ENCODE measurements at regions of chr3 and their contacts with region 1.

Region 1: DNA sequence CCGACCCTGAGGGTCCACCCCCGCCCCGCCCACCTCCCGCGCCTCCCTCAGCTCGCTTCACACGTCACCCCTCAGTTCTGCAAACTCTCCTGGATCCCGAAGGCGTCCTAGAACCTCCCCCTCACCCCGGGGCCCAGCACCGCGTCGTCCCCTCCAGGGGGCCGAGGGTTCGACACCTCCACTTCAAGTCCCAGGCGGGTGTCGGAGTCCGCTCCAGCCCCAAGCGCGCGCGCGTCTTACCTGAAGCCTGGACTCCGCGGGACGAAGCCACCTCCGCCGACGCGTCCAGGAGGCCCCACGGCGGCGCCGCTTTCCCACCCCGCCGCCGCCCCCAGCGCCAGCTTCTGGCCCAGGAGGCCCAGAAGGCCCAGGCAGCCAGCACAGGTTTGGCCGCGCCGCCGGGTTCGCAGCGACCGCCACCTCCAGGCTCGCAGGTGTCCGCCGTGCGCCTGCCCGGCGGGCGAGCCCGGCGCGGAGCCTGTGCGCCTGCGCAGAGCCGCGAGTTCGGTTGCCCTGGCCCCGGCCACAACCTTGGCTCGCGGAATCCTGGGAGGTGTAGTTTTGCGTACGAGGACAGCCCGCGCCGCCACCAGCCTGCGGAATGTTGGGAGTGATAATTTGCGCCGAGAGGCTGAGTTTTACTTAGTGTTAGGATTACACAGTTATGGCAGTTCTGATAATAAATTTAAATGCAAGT is at the start of gene POMGNT2:
- DNase-seq: peak; percentile 93
- H3K4me3 ChIP-seq: peak within 1 kb of the TSS; percentile 72 to 91 (median 82)
- H3K27ac ChIP-seq: peak within 1 kb of the TSS; percentile 66 to 83 (median 72)
- H3K4me1 ChIP-seq: peaks cover 0 to 30% (median 23%) of the 10 kb centered on the region in 4 donors
- H3K27me3 ChIP-seq: no peaks in the 10 kb centered on the region
- CTCF ChIP-seq: no peak
- EP300 ChIP-seq: no peak
- POLR2A ChIP-seq: no peak
- total RNA-seq, gene POMGNT2: 15.5 to 20.2 (median 17.2) TPM

Region 2: GRCh38 chr3:42979044-42979972 is 126.4 kb before region 1 on chr3 and contains the start of gene GASK1A:
- intact Hi-C with region 1: loop called (anchors 5 kb)
- DNase-seq: peak; percentile 85
- H3K4me3 ChIP-seq: peak within 1 kb of the TSS; percentile 45 to 89 (median 64)
- H3K27ac ChIP-seq: peak within 1 kb of the TSS; percentile 64 to 79 (median 75)
- H3K4me1 ChIP-seq: peaks cover 0 to 26% (median 19%) of the 10 kb centered on the region in 4 donors
- H3K27me3 ChIP-seq: no peaks in the 10 kb centered on the region
- CTCF ChIP-seq: no peak
- EP300 ChIP-seq: no peak
- POLR2A ChIP-seq: no peak
- total RNA-seq, gene GASK1A: 8.1 to 32.7 (median 18.1) TPM

Region 3: GRCh38 chr3:43001094-43001553 is 104.6 kb before region 1 on chr3:
- intact Hi-C with region 1: loop called (anchors 2 kb)
- DNase-seq: peak; percentile 97
- H3K4me3 ChIP-seq: peak overlapping the region in 2 of 4 donors; percentile 16 to 23
- H3K27ac ChIP-seq: peak overlapping the region; percentile 63 to 90 (median 88)
- H3K4me1 ChIP-seq: peaks cover 0 to 78% (median 56%) of the 10 kb centered on the region in 4 donors
- H3K27me3 ChIP-seq: no peaks in the 10 kb centered on the region
- CTCF ChIP-seq: no peak
- EP300 ChIP-seq: peak; percentile 55 to 95 (median 90)
- POLR2A ChIP-seq: no peak

Region 4: DNA sequence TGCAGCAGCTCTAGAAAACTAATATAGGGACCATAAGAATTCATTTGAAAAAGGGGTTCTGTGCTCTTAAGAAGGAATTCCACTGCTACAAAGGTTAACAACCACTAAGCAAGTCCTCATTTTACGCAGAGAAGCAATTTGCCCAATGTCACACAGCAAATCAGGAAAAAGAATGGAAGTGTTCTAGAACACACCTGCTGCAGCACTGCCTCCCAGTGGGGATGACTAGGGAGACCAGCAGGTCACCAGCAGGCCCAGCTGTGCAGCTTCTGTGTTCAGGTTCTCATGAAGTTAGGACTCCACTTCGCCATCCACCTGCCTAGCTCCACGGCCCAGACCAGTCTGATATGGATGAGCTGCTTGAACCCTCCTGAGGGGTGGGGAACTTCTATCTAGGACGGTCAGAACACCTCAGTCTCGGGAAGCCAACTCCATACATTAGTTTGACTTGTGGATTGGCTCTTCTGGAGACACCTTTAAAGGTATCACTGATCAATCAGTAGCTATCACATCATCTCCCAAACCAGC is 18.4 kb before region 1 on chr3:
- intact Hi-C with region 1: no loop called
- DNase-seq: no peak
- H3K4me3 ChIP-seq: no peak overlapping the region
- H3K27ac ChIP-seq: no peak overlapping the region
- H3K4me1 ChIP-seq: peaks cover 0 to 22% (median 16%) of the 10 kb centered on the region in 4 donors
- H3K27me3 ChIP-seq: no peaks in the 10 kb centered on the region
- CTCF ChIP-seq: no peak
- EP300 ChIP-seq: no peak
- POLR2A ChIP-seq: no peak

Region 5: DNA sequence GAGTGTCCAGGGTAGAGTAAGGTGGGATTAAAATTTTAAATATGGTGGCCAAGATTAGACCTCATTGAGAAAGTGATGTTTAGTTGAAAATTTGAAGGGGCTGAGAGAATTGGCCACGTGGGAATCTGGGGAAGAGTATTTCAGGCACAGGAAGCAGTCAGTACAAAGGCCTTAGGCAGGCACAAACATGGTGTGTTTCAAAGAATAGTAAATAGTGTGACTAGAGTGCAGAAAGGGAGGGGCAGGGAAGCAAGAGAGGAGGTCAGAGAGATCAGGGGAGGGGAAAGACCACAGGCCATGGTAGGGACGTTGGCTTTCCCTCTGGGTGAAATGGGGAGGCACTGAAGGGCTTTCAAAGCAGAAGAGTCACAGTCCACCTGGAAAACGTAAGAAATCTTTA is 36.7 kb after region 1 on chr3:
- intact Hi-C with region 1: no loop called
- DNase-seq: no peak
- H3K4me3 ChIP-seq: no peak overlapping the region
- H3K27ac ChIP-seq: no peak overlapping the region
- H3K4me1 ChIP-seq: no peaks in the 10 kb centered on the region
- H3K27me3 ChIP-seq: no peaks in the 10 kb centered on the region
- CTCF ChIP-seq: no peak
- EP300 ChIP-seq: no peak
- POLR2A ChIP-seq: no peak

Region 6: GRCh38 chr3:43155464-43156121 is 49.8 kb after region 1 on chr3:
- intact Hi-C with region 1: loop called (anchors 5 kb)
- DNase-seq: peak; percentile 86
- H3K4me3 ChIP-seq: no peak overlapping the region
- H3K27ac ChIP-seq: no peak overlapping the region
- H3K4me1 ChIP-seq: peaks cover 0 to 19% (median 16%) of the 10 kb centered on the region in 4 donors
- H3K27me3 ChIP-seq: no peaks in the 10 kb centered on the region
- CTCF ChIP-seq: peak; percentile 42 to 76 (median 68)
- EP300 ChIP-seq: no peak
- POLR2A ChIP-seq: no peak

Region 7: GRCh38 chr3:43223670-43224364 is 118.1 kb after region 1 on chr3:
- intact Hi-C with region 1: no loop called
- DNase-seq: no peak
- H3K4me3 ChIP-seq: no peak overlapping the region
- H3K27ac ChIP-seq: no peak overlapping the region
- H3K4me1 ChIP-seq: no peaks in the 10 kb centered on the region
- H3K27me3 ChIP-seq: no peaks in the 10 kb centered on the region
- CTCF ChIP-seq: peak in 1 of 4 experiments; percentile 49
- EP300 ChIP-seq: no peak
- POLR2A ChIP-seq: no peak

Region 8: DNA sequence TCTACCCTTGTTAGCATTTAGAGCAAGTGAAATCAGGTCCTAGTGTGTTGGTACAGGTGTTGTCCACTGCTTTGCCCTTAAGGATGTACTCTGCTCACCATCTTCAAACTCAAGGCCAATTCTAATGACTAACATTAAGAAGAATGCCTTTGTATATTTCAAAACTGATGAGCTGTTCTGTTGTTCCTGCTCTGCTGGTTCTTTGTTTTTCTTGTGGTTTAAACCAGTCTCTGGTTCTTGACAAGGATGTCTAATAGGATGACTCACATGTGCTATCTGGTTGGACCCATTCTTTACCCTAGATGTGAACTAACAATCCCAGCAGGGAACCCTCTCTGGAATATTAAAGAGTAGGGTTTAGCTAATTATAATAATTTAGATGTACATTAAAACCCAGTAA is 602.3 kb after region 1 on chr3:
- intact Hi-C with region 1: no loop called
- DNase-seq: no peak
- H3K4me3 ChIP-seq: no peak overlapping the region
- H3K27ac ChIP-seq: no peak overlapping the region
- H3K4me1 ChIP-seq: peaks cover 0 to 13% (median 0%) of the 10 kb centered on the region in 4 donors
- H3K27me3 ChIP-seq: no peaks in the 10 kb centered on the region
- CTCF ChIP-seq: no peak
- EP300 ChIP-seq: no peak
- POLR2A ChIP-seq: no peak

Measured in sigmoid colon (tissue), 7 donors.